ENCODE measurements at regions of chr5 and their contacts with region 1.

Region 1: DNA sequence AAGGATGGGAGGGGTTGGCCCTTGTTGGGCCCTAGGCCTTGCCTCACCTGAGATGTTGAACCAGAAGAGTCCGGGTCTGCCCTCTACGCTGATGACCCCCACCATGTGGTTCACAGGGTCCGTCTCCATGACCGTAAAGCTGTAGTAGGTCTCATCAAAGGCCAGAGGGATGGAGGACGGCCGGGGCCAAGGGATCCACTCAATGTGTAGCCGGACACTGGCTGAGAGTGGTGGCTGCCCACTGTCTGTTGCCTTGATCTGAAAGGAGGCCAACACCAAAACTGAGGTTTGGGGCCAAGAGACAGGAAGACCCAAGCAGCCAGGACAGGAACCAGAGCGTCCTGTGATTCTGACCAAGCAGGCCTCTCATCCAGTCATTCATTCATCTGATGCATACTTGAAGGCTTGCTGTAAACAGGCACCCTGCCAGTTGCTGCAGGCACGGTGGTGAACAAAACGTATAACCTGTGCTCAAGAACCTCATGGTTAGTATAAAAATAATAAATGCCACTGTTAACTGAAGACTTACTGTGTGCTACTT is 37.9 kb downstream of the FAT2 start:
- DNase-seq: no peak
- ATAC-seq: peak; percentile 17

Region 2: DNA sequence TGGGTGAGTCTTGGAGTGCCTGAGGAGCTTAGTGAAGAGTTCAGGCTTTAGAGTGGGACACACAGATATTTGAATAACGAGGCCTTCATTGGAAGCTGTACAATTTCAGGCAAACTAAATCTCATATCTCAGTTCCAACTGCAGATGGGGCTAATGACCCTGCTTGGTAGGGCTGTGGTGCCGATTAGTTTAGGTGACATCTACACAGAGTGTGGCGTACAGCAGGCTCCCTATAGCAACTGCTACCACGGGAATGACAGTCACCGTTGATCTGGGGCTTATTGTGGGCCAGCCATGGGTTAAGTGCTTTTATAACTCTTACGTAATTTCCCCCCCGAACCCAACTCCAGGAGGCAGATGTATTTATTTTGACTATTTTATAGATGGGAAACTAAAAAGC is 32.9 kb before region 1 on chr5:
- intact Hi-C with region 1: loop called (anchors 2 kb)
- DNase-seq: no peak
- ATAC-seq: peak; percentile 64